ENCODE measurements at regions of chr6 and their contacts with region 1.

Region 1: DNA sequence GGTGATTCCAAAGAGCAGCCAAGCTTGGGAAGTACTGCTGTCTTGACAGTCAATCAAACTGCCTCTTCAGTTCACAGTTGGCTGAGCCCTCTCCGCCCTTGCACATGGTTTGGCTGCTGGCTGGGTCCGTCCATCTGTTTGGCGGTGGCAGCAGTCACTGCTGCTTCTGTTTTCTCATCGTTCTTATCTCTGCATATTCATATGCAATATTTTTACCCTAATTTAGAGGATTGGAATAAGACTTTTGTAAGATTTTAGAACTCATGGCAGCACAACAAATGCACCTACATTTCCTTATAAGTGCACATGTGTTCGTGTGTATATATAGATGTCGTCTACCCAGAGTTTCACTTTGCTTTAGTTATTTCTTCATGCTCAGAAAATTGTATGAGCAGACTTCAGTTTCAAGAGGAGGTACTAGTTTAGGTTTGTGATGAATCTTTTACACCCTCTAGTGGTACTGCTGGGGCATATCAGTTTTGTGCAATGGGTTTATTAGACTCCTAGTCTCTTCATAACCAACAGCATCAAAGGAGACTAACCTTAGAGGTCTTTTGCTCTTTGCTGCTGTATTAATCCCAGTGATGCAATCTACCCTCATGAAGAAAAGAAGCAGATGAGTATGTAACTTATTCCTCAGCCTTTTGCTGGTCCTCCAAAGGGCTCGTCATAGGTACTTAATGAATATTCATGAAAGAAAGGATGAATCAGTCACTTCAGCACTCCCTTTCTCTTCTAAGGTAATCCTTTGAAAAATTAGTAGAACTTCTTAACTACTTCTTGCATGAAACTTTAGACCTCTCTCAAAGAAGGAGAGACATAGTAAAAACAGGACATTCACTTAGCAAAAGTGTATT is 44.3 kb downstream of the KHDC1L start:
- DNase-seq: peak; percentile 59
- H3K4me3 ChIP-seq: no peak overlapping the region
- H3K27ac ChIP-seq: no peak overlapping the region
- H3K4me1 ChIP-seq: no peaks in the 10 kb centered on the region
- H3K27me3 ChIP-seq: no peaks in the 10 kb centered on the region
- CTCF ChIP-seq: peak; percentile 90 to 91

Region 2: GRCh38 chr6:72140795-72141194 is 1040.2 kb before region 1 on chr6:
- CTCF ChIA-PET with region 1: no interaction called
- dilution Hi-C with region 1: no loop called
- in situ Hi-C with region 1: no loop called
- intact Hi-C with region 1: loop called (anchors 1 kb)
- DNase-seq: peak; percentile 11
- H3K4me3 ChIP-seq: no peak overlapping the region
- H3K27ac ChIP-seq: no peak overlapping the region
- H3K4me1 ChIP-seq: no peaks in the 10 kb centered on the region
- H3K27me3 ChIP-seq: no peaks in the 10 kb centered on the region
- CTCF ChIP-seq: peak; percentile 32 to 46

Region 3: GRCh38 chr6:72622094-72622940 is 558.7 kb before region 1 on chr6:
- CTCF ChIA-PET with region 1: no interaction called
- dilution Hi-C with region 1: no loop called
- in situ Hi-C with region 1: no loop called
- intact Hi-C with region 1: loop called (anchors 1 kb)
- DNase-seq: peak; percentile 46
- H3K4me3 ChIP-seq: peak overlapping the region; percentile 65 to 72 (median 72)
- H3K27ac ChIP-seq: peak overlapping the region; percentile 50
- H3K4me1 ChIP-seq: peaks cover 21% of the 10 kb centered on the region
- H3K27me3 ChIP-seq: no peaks in the 10 kb centered on the region
- CTCF ChIP-seq: peak in 1 of 2 donors; percentile 35

Region 4: GRCh38 chr6:73129653-73130443 is 51.1 kb before region 1 on chr6:
- CTCF ChIA-PET with region 1: no interaction called
- dilution Hi-C with region 1: loop called (anchors 5 kb)
- in situ Hi-C with region 1: no loop called
- intact Hi-C with region 1: loop called (anchors 1 kb)
- DNase-seq: peak; percentile 83
- H3K4me3 ChIP-seq: no peak overlapping the region
- H3K27ac ChIP-seq: no peak overlapping the region
- H3K4me1 ChIP-seq: peaks cover 18% of the 10 kb centered on the region
- H3K27me3 ChIP-seq: no peaks in the 10 kb centered on the region
- CTCF ChIP-seq: peak; percentile 100

Region 5: GRCh38 chr6:73388800-73389512 is 208.0 kb after region 1 on chr6:
- CTCF ChIA-PET with region 1: no interaction called
- dilution Hi-C with region 1: no loop called
- in situ Hi-C with region 1: no loop called
- intact Hi-C with region 1: loop called (anchors 10 kb)
- DNase-seq: peak; percentile 63
- H3K4me3 ChIP-seq: peak overlapping the region; percentile 32 to 58 (median 47)
- H3K27ac ChIP-seq: no peak overlapping the region
- H3K4me1 ChIP-seq: peaks cover 2% of the 10 kb centered on the region
- H3K27me3 ChIP-seq: no peaks in the 10 kb centered on the region
- CTCF ChIP-seq: peak; percentile 54 to 81

Measured in mammary epithelial cell (primary cell).